Left cardiac atrium (tissue), 4 donors: ENCODE measurements at regions of chr13 and their contacts with region 1.

Region 1: GRCh38 chr13:94128430-94128829 is 351.1 kb downstream of the DCT start:
- DNase-seq: peak; percentile 26
- ATAC-seq: peak; percentile 96 to 97

Region 2: GRCh38 chr13:94154389-94154788 is 26.0 kb after region 1 on chr13:
- intact Hi-C with region 1: loop called in 1 of 2 experiments (anchors 2 kb)
- DNase-seq: no peak
- ATAC-seq: peak; percentile 41 to 78

Region 3: DNA sequence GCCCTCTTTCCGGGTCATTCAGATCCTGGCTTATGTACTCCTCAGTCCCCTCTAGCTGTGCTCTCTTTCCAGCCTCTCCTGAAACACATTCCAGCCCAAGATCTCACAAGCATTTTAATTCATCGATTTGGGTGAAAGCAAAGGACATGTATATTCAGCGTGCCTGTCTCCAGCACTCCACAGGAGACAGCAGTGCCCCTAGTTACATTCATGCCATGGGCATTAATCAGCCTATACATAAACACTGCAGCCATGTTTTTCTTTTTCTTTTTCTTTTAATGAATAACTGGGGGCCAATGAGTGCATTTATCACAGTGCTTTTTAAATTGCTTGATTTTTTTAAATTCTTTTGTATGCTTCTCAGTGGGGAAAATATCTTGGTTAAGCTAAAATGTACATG is 151.9 kb after region 1 on chr13:
- intact Hi-C with region 1: no loop called
- DNase-seq: no peak
- ATAC-seq: no peak